ENCODE measurements at regions of chr19 and their contacts with region 1.

Region 1: GRCh38 chr19:18259893-18260292 is 14.4 kb downstream of the IQCN start:
- DNase-seq: no peak
- H3K4me3 ChIP-seq: no peak overlapping the region
- H3K27ac ChIP-seq: no peak overlapping the region
- H3K4me1 ChIP-seq: peaks cover under 1 to 7% (median 5%) of the 10 kb centered on the region in 4 experiments
- H3K27me3 ChIP-seq: peaks cover 0 to 10% (median 0%) of the 10 kb centered on the region in 4 experiments; a peak in 3 of 7 replicates
- CTCF ChIP-seq: no peak
- EP300 ChIP-seq: no peak
- POLR2A ChIP-seq: no peak
- RAD21 ChIP-seq: no peak

Region 2: DNA sequence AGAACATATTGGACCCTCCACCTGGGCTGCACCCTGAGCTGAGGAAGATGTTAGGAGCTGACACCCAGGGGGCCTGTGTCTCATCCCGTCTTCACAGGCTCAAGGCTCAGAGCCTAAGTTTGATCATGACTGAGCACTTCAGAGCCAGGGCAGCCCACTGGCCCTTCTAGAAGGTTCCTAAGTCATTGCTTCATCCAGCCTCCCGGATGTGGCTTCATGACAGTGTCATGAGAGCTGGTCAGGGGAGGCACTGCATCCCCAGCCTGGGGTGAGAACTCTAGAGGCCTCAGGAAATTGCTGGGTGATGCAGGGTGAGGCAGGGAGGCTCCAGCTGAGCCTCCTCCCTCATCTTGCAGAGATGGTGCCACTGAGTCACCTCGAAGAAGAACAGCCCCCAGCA is 131.8 kb before region 1 on chr19:
- CTCF ChIA-PET with region 1: no interaction called
- POLR2A ChIA-PET with region 1: no interaction called
- DNase-seq: no peak
- H3K4me3 ChIP-seq: no peak overlapping the region
- H3K27ac ChIP-seq: no peak overlapping the region
- H3K4me1 ChIP-seq: no peaks in the 10 kb centered on the region
- H3K27me3 ChIP-seq: no peaks in the 10 kb centered on the region
- CTCF ChIP-seq: no peak
- EP300 ChIP-seq: no peak
- POLR2A ChIP-seq: no peak
- RAD21 ChIP-seq: no peak

Region 3: DNA sequence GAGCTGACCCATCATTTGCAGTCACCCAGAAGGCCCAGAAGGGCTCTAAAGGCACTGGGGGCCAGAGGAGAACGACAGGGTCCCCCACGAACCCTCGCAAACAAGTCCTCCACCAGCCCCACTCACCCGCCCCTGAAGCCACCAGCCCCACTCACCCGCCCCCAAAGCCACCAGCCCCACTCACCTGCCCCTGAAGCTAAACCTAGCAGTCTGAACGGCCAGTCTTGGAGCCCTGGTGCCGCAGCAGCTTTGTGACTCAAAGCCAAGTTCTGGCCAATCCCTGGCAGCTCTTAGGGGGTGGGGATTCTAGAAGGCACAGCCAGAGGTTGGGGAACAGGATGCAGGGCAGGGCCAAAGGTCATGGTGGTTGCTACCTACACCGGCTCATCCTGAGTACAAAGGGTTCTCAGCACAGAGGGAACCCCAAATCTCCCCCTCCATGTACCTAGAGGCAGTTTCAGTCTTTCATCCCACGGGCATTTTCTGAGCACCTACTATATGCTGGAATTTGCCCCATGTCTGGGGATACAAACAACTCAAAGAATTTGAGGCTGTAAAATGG is 14.4 kb after region 1 on chr19 and contains the start of gene IQCN:
- CTCF ChIA-PET with region 1: interaction called, 172 read pairs
- POLR2A ChIA-PET with region 1: interaction called, 62 read pairs
- DNase-seq: no peak
- H3K4me3 ChIP-seq: no peak within 1 kb of the TSS
- H3K27ac ChIP-seq: no peak within 1 kb of the TSS
- H3K4me1 ChIP-seq: peaks cover 0 to 9% (median 8%) of the 10 kb centered on the region in 4 experiments; a peak in 6 of 7 replicates
- H3K27me3 ChIP-seq: no peaks in the 10 kb centered on the region
- CTCF ChIP-seq: no peak
- EP300 ChIP-seq: no peak
- POLR2A ChIP-seq: no peak
- RAD21 ChIP-seq: no peak
- total RNA-seq, gene IQCN: 0.31 and 1.0 TPM in 2 replicates

Region 4: DNA sequence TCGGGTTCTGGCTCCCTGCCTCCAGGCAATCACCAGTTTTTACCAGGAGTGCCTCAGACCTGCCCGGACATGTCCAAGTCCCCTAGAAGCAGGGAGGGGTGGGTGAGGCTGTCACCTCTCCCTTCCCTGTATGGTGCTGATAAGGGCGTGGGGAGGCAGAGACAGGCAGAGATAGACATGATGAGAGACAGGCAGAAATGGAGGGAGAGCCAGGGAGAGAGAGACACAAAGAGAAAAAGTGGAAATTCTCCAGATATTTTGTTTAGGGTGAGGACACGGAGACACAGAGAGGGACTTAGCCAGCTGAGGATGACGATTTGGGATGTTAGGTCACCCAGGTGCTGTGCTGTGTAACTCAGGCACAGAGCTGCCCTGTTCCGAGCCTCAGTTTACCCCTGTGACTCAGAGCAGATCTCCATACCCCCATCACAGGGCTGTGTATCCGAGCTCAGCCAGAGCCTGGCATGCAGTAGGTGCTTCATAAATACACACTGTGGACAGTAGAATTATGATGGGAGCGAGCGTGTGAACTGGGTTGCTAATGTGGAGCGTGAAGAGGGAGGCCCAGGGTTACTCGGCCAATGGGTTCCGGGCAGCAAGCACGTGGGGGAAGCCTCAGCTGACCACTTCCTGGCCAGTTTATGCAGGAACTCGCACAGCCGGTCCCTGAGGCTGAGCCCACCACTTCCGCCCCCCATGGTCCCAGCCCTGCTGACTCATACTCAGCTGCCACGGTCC is 114.2 kb after region 1 on chr19:
- CTCF ChIA-PET with region 1: no interaction called
- POLR2A ChIA-PET with region 1: no interaction called
- DNase-seq: peak; percentile 81 to 86
- H3K4me3 ChIP-seq: no peak overlapping the region
- H3K27ac ChIP-seq: peak overlapping the region; percentile 59
- H3K4me1 ChIP-seq: peaks cover 3 to 21% (median 8%) of the 10 kb centered on the region in 4 experiments; a peak in 6 of 7 replicates
- H3K27me3 ChIP-seq: no peaks in the 10 kb centered on the region
- CTCF ChIP-seq: no peak
- EP300 ChIP-seq: peak in 1 of 2 experiments; percentile 83; a peak in 2 of 3 replicates
- POLR2A ChIP-seq: 0 out of 3 replicates have a peak, but pooled peaks of 1 of the 2 experiments have one; percentile 45
- RAD21 ChIP-seq: no peak